Panc1 (cell line): ENCODE measurements at regions of chr19 and their contacts with region 1.

Region 1: DNA sequence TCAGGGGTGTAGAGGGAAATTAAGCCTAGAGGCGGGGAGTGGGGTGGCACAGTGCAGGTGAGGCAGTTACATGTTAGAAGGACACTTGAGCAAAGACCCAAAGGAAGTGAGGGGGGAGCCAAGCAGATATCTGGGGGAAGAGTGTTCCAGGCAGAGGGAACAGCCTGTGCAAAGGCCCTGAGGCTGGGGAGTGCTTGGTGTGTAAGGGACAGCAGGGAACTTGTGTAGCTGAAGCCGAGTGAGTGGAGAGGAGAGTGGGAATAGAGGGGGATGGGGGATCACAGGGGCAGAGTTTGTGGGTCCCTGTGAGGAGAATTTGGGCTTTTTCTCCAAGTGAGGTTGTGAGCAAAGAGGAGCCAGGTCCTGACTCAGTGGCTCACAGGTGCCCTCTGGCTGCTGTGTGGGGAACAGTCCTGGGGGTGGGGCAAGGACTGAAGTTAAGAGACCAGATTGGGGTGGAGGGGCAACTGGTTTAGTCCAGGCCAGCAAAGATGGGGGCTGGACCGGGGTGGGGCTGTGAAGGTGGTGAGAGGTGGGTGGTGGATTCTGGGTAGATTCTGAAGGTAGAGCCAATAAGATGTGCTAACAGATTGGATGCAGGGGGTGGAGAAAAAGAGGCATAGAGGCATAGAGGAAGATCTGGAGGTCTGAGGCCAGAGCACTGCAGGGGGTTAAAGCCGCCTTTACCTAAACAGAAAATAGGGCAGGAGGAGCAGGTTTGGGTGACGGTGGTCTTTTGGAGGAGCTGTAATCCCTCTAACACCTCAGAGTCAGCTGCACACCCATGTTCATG is 75.3 kb downstream of the CACNA1A start:
- DNase-seq: peak; percentile 36
- ATAC-seq: peak; percentile 81
- H3K4me3 ChIP-seq: no peak overlapping the region
- H3K27ac ChIP-seq: no peak overlapping the region
- H3K4me1 ChIP-seq: no peaks in the 10 kb centered on the region
- H3K27me3 ChIP-seq: no peaks in the 10 kb centered on the region
- CTCF ChIP-seq: peak; percentile 83

Region 2: DNA sequence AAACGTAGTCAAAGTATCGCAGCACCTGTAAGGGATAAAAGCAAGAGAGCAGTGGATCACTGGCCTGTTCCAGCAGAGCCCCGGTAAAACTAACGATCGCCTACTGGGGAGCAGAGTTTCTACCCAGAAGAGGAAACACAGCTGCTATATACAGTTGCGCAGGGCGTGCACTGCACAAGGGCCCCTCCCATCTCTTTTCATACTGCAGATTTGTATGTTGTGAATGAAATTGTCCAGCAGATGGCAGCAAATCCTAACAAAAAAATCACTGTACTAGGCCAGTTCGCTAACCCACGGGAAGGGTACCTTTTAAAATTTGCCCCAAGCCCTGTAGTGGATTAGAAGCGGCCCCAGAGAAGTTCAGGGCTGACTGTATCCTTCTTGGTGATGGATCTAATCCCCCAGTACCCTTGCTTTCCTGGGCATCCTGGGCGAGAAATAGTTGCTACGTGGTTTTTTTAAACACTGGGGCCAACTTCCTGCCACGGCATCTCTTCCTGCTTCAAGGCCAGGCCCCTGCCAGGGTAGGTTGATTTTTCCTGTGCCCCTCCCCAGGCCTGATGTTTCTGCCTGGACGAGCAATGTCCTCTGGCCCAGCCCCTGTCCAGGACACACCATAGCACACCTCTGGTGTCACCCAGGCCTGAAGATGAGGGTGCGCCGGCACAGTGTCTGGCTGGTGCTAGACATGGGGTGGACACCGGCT is 153.7 kb before region 1 on chr19:
- CTCF ChIA-PET with region 1: interaction called, 9 read pairs
- POLR2A ChIA-PET with region 1: no interaction called
- in situ Hi-C with region 1: no loop called
- intact Hi-C with region 1: loop called (anchors 5 kb)
- DNase-seq: peak; percentile 64
- ATAC-seq: peak; percentile 95
- H3K4me3 ChIP-seq: no peak overlapping the region
- H3K27ac ChIP-seq: peak overlapping the region; percentile 17; the same call in 1 of the 2 replicates
- H3K4me1 ChIP-seq: no peaks in the 10 kb centered on the region; the same call in 1 of the 2 replicates
- H3K27me3 ChIP-seq: no peaks in the 10 kb centered on the region
- CTCF ChIP-seq: no peak; the same call in 1 of the 2 replicates

Region 3: DNA sequence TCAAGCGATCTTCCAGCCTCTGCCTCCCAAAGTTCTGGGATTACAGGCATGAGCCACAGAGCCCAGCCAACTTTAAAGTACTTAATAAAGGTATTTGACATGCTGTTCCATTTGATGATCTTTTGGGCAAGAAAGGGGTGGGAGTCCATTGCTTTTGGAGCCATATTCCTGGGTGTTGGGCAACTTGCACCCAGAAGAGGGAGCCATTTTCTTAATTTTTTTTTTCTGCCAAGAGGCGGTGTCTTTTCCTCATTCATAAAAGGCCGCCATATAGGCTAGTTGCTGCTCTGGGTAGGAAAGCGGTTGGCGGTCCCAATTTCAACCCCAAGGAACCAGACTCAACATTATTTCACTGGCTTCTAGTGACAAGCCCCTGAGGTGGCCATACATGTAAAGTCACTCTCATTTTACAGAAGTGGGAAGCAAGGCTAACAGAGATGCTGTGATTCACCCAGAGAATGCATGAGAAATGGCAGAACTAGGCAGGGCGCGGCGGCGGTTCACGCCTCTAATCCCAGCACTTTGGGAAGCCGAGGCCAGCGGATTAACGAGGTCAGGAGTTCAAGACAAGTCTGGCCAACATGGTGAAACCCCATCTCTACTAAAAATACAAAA is 64.3 kb before region 1 on chr19:
- CTCF ChIA-PET with region 1: interaction called, 3 read pairs
- POLR2A ChIA-PET with region 1: no interaction called
- in situ Hi-C with region 1: no loop called
- intact Hi-C with region 1: loop called (anchors 5 kb)
- DNase-seq: no peak
- ATAC-seq: peak; percentile 34; the same call in 1 of the 2 replicates
- H3K4me3 ChIP-seq: no peak overlapping the region
- H3K27ac ChIP-seq: no peak overlapping the region
- H3K4me1 ChIP-seq: no peaks in the 10 kb centered on the region
- H3K27me3 ChIP-seq: no peaks in the 10 kb centered on the region
- CTCF ChIP-seq: peak; percentile 68

Region 4: DNA sequence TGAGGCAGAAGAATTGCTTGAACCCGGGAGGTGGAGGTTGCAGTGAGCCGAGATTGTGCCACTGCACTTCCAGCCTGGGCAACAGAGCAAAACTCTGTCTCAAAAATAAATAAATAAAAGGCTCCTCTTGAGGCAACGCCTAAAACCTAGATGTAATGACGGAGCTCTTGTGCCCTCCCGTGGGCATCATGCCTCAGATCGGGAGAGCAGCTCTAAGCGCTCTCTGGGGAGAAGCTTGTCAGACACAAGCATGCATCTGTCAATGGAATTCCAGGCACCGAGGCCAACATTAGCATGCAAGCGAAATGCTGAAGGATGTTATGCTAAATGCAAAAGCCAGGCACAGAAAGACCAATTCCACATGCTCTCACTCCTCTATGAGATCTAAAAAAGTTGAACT is 287.7 kb after region 1 on chr19:
- CTCF ChIA-PET with region 1: no interaction called
- POLR2A ChIA-PET with region 1: interaction called, 11 read pairs
- in situ Hi-C with region 1: no loop called
- intact Hi-C with region 1: no loop called
- DNase-seq: no peak
- ATAC-seq: peak; percentile 89
- H3K4me3 ChIP-seq: no peak overlapping the region
- H3K27ac ChIP-seq: peak overlapping the region; percentile 67
- H3K4me1 ChIP-seq: peaks cover 9% of the 10 kb centered on the region; the same call in 1 of the 2 replicates
- H3K27me3 ChIP-seq: no peaks in the 10 kb centered on the region
- CTCF ChIP-seq: peak; percentile 73